Heart right ventricle (tissue), 16 donors: ENCODE measurements at regions of chr12 and their contacts with region 1.

Region 1: GRCh38 chr12:1650260-1650977 is 21.4 kb downstream of the WNT5B start:
- DNase-seq: no peak
- ATAC-seq: peak; percentile 49 to 82 (median 72)
- H3K4me3 ChIP-seq: no peak overlapping the region
- H3K27ac ChIP-seq: peak overlapping the region; percentile 2 to 75 (median 61)
- H3K4me1 ChIP-seq: peaks cover 5 to 35% (median 22%) of the 10 kb centered on the region in 9 donors
- H3K27me3 ChIP-seq: no peaks in the 10 kb centered on the region
- CTCF ChIP-seq: no peak

Region 2: DNA sequence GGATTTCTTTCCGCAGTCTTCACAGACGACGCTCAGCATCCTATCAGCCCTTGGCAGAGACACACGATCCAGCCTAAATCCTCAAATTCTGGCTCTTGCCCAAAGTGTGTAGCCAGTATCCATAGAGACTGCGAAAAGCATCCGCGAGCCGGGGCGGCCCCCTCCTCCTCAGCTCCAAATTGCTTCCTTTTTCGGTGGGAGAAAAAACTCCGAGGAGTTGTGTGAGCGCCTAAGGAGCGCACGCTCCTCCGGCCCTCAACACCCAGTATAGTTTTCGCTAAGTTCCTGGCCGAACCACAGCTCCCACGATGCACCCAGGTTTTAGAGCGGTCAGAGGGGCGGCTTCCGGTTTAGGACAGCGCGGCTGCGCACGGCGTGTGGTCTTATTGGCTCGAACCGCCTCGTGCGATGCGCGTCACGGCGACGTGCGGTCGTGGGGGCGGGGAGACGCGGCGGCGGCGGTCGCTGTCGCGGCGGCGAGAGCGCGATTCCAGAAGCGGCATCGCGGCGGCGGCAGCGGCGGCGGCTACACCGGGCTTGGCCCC is 40.2 kb after region 1 on chr12 and contains the start of gene ADIPOR2:
- intact Hi-C with region 1: loop called in 1 of 10 experiments (anchors 5 kb)
- DNase-seq: peak; percentile 95 to 96
- ATAC-seq: peak; percentile 99 to 100 (median 100)
- H3K4me3 ChIP-seq: peak within 1 kb of the TSS; percentile 70 to 96 (median 84)
- H3K27ac ChIP-seq: peak within 1 kb of the TSS; percentile 85 to 97 (median 94)
- H3K4me1 ChIP-seq: peaks cover 0 to 38% (median 20%) of the 10 kb centered on the region in 9 donors
- H3K27me3 ChIP-seq: no peaks in the 10 kb centered on the region
- CTCF ChIP-seq: no peak
- total RNA-seq, gene ADIPOR2: 33.5 to 47.7 (median 42.1) TPM

Region 3: DNA sequence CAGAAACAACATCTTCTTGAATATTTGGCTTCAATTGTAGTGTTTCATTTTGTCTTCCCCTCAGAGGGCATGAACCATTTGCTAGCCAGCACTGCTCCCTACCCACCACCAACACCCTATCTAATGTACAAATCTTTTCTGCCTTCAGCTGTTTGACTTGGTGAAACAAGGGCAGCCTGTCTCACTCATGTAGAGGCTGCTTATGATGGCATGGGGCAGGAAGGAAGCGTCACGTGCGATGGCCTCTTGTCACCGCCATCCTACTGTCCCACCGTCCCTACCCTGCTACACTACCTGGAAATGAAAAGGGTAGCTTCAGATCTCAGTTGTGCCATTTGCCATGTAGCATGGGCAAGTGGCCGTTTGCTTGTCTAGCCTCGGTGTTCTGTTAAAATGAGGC is 140.0 kb after region 1 on chr12:
- intact Hi-C with region 1: loop called (anchors 1 to 2 kb)
- DNase-seq: no peak
- ATAC-seq: peak in 1 of 8 donors; percentile 3
- H3K4me3 ChIP-seq: no peak overlapping the region
- H3K27ac ChIP-seq: no peak overlapping the region
- H3K4me1 ChIP-seq: peaks cover 0 to 39% (median 28%) of the 10 kb centered on the region in 9 donors
- H3K27me3 ChIP-seq: no peaks in the 10 kb centered on the region
- CTCF ChIP-seq: no peak